ENCODE measurements at regions of chr1 and their contacts with region 1.

Region 1: GRCh38 chr1:171841050-171841940 is at the start of gene DNM3:
- DNase-seq: peak; percentile 54 to 90 (median 75)
- ATAC-seq: peak; percentile 94
- H3K4me3 ChIP-seq: peak within 1 kb of the TSS; percentile 80
- H3K4me3 Mint-ChIP-seq: peak within 1 kb of the TSS; percentile 94
- H3K27ac ChIP-seq: no peak within 1 kb of the TSS
- H3K27ac Mint-ChIP-seq: peak within 1 kb of the TSS; percentile 69
- H3K4me1 ChIP-seq: peaks cover 17% of the 10 kb centered on the region
- H3K4me1 Mint-ChIP-seq: peaks cover 18% of the 10 kb centered on the region
- H3K27me3 ChIP-seq: peaks cover 4 to 10% of the 10 kb centered on the region in 2 experiments
- H3K27me3 Mint-ChIP-seq: peaks cover 5% of the 10 kb centered on the region
- CTCF ChIP-seq: no peak
- total RNA-seq, gene DNM3: 1.6 to 1.8 TPM

Region 2: GRCh38 chr1:170074250-170075157 is 1766.8 kb before region 1 on chr1 and contains the start of gene KIFAP3:
- CTCF ChIA-PET with region 1: no interaction called
- POLR2A ChIA-PET with region 1: no interaction called
- intact Hi-C with region 1: loop called in 1 of 2 experiments (anchors 5 kb)
- DNase-seq: peak; percentile 88 to 99 (median 93)
- ATAC-seq: peak; percentile 95
- H3K4me3 ChIP-seq: peak within 1 kb of the TSS; percentile 83
- H3K4me3 Mint-ChIP-seq: peak within 1 kb of the TSS; percentile 97
- H3K27ac ChIP-seq: peak within 1 kb of the TSS; percentile 77 to 83
- H3K27ac Mint-ChIP-seq: peak within 1 kb of the TSS; percentile 85
- H3K4me1 ChIP-seq: peaks cover 15% of the 10 kb centered on the region
- H3K4me1 Mint-ChIP-seq: peaks cover 54% of the 10 kb centered on the region
- H3K27me3 ChIP-seq: no peaks in the 10 kb centered on the region
- H3K27me3 Mint-ChIP-seq: no peaks in the 10 kb centered on the region
- CTCF ChIP-seq: peak; percentile 69
- total RNA-seq, gene KIFAP3: 12.1 to 12.6 TPM

Region 3: DNA sequence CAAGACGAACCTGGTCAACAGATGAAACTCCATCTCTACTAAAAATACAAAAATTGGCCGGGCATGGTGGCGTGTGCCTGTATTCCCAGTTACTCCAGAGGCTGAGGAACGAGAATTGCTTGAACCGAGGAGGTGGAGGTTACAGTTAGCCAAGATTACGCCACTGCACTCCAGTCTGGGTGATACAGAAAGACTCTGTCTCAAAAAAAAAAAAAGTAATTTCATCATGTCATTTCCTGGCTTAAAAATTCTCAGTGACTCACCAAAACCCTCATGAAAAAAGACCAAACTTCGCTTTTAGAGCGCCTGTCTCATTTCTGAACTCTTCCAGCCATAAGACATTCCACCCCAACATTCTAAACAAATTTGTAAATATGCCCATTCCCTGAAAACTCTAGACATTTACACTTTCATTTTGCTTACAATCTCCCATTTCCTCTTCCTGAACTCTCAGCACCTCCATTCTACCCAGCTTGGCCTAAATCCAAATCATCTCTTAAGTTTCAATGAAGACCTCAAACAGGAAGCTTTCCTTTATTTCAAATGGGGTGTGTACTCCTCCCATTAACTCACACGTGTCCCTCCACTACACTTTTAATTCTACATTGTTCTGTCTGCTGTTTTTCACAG is 406.5 kb before region 1 on chr1:
- CTCF ChIA-PET with region 1: no interaction called
- POLR2A ChIA-PET with region 1: no interaction called
- intact Hi-C with region 1: no loop called
- DNase-seq: peak in 4 of 14 experiments; percentile 30 to 59 (median 43)
- ATAC-seq: peak; percentile 73
- H3K4me3 ChIP-seq: no peak overlapping the region
- H3K4me3 Mint-ChIP-seq: peak overlapping the region; percentile 12
- H3K27ac ChIP-seq: peak overlapping the region in 1 of 2 donors; percentile 32
- H3K27ac Mint-ChIP-seq: peak overlapping the region; percentile 80
- H3K4me1 ChIP-seq: peaks cover 11% of the 10 kb centered on the region
- H3K4me1 Mint-ChIP-seq: peaks cover 19% of the 10 kb centered on the region
- H3K27me3 ChIP-seq: no peaks in the 10 kb centered on the region
- H3K27me3 Mint-ChIP-seq: no peaks in the 10 kb centered on the region
- CTCF ChIP-seq: no peak

Region 4: DNA sequence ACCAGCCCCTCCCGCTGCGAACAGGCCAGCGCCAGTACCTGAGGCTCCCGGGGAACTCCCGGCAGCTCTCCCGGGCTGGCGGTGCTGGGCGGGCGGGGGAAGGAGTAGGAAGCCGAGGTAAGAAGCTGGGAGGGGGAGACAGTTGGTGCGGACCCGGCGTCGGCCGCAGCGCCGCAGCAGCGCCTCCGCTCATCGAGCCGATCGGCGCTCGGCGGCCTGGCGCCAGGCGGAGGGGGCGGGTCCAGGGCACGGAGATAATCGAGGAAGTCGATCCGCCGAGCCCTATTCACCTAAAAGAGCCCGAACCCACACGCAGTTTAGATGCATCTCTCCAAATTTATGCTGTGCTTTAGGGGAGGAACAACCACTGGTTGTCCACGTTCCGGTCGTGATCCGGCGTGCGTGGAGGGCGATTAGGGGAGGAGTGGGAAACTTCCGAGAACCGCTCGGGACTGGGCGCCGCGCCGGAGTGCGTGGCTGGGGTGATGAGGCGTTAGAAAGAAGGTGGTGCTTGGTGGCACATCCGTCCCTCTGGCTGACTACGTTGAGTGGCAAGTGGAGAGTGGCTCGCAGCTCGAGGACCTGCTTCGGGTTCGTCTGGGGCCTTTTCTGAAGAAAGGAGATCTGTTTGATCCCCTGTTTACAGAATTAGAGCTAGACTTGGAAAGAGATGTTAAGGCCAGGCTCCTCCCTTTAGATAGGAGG is 99.3 kb before region 1 on chr1 and contains the start of gene VAMP4:
- CTCF ChIA-PET with region 1: no interaction called
- POLR2A ChIA-PET with region 1: interaction called, 11 read pairs
- intact Hi-C with region 1: loop called (anchors 2 to 10 kb)
- DNase-seq: peak; percentile 77 to 94 (median 84)
- ATAC-seq: peak; percentile 88
- H3K4me3 ChIP-seq: peak within 1 kb of the TSS; percentile 80
- H3K4me3 Mint-ChIP-seq: peak within 1 kb of the TSS; percentile 99
- H3K27ac ChIP-seq: peak within 1 kb of the TSS; percentile 95 to 96
- H3K27ac Mint-ChIP-seq: peak within 1 kb of the TSS; percentile 100
- H3K4me1 ChIP-seq: peaks cover 28% of the 10 kb centered on the region
- H3K4me1 Mint-ChIP-seq: peaks cover 63% of the 10 kb centered on the region
- H3K27me3 ChIP-seq: no peaks in the 10 kb centered on the region
- H3K27me3 Mint-ChIP-seq: no peaks in the 10 kb centered on the region
- CTCF ChIP-seq: no peak
- total RNA-seq, gene VAMP4: 8.1 to 12.1 TPM

Region 5: DNA sequence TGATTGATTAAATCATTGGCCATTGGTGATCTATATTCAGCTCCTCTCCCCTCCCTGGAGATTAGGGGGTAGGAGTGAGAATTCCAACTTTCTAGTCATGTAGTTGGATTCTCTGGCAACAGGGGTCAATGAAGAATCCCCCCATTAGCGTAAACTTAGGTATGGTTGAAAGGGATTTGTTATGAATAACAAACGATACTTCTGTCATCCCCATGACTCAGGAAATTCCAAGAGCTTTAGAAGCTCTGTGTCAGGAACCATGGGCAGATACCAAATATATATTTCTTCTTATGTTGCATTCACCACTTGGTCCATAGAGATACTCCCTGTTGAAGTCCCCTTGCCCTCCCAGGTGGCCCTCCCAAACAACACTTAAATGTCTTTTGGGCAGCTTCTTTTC is 124.5 kb after region 1 on chr1:
- CTCF ChIA-PET with region 1: no interaction called
- POLR2A ChIA-PET with region 1: no interaction called
- intact Hi-C with region 1: no loop called
- DNase-seq: no peak
- ATAC-seq: no peak
- H3K4me3 ChIP-seq: no peak overlapping the region
- H3K4me3 Mint-ChIP-seq: no peak overlapping the region
- H3K27ac ChIP-seq: no peak overlapping the region
- H3K27ac Mint-ChIP-seq: no peak overlapping the region
- H3K4me1 ChIP-seq: no peaks in the 10 kb centered on the region
- H3K4me1 Mint-ChIP-seq: no peaks in the 10 kb centered on the region
- H3K27me3 ChIP-seq: no peaks in the 10 kb centered on the region
- H3K27me3 Mint-ChIP-seq: no peaks in the 10 kb centered on the region
- CTCF ChIP-seq: no peak

Region 6: GRCh38 chr1:172180501-172181285 is 339.4 kb after region 1 on chr1:
- CTCF ChIA-PET with region 1: no interaction called
- POLR2A ChIA-PET with region 1: no interaction called
- intact Hi-C with region 1: loop called in 1 of 2 experiments (anchors 5 kb)
- DNase-seq: peak in 12 of 14 experiments; percentile 11 to 79 (median 30)
- ATAC-seq: peak; percentile 65
- H3K4me3 ChIP-seq: peak overlapping the region; percentile 41
- H3K4me3 Mint-ChIP-seq: peak overlapping the region; percentile 83
- H3K27ac ChIP-seq: peak overlapping the region; percentile 71 to 89
- H3K27ac Mint-ChIP-seq: peak overlapping the region; percentile 97
- H3K4me1 ChIP-seq: peaks cover 11% of the 10 kb centered on the region
- H3K4me1 Mint-ChIP-seq: peaks cover 49% of the 10 kb centered on the region
- H3K27me3 ChIP-seq: no peaks in the 10 kb centered on the region
- H3K27me3 Mint-ChIP-seq: no peaks in the 10 kb centered on the region
- CTCF ChIP-seq: no peak

Region 7: GRCh38 chr1:173489149-173489934 is 1648.0 kb after region 1 on chr1:
- CTCF ChIA-PET with region 1: no interaction called
- POLR2A ChIA-PET with region 1: no interaction called
- intact Hi-C with region 1: loop called in 1 of 2 experiments (anchors 10 kb)
- DNase-seq: no peak
- ATAC-seq: no peak
- H3K4me3 ChIP-seq: no peak overlapping the region
- H3K4me3 Mint-ChIP-seq: no peak overlapping the region
- H3K27ac ChIP-seq: no peak overlapping the region
- H3K27ac Mint-ChIP-seq: no peak overlapping the region
- H3K4me1 ChIP-seq: no peaks in the 10 kb centered on the region
- H3K4me1 Mint-ChIP-seq: no peaks in the 10 kb centered on the region
- H3K27me3 ChIP-seq: no peaks in the 10 kb centered on the region
- H3K27me3 Mint-ChIP-seq: no peaks in the 10 kb centered on the region
- CTCF ChIP-seq: no peak

Measured in CD4-positive, alpha-beta T cell (primary cell).